ENCODE measurements at regions of chr12 and their contacts with region 1.

Region 1: GRCh38 chr12:120495723-120496412 is at the start of gene DYNLL1:
- DNase-seq: peak; percentile 97
- ATAC-seq: peak; percentile 96
- H3K4me3 Mint-ChIP-seq: peak within 1 kb of the TSS; percentile 84
- H3K27ac Mint-ChIP-seq: peak within 1 kb of the TSS; percentile 72
- H3K4me1 Mint-ChIP-seq: peaks cover 30% of the 10 kb centered on the region
- H3K27me3 Mint-ChIP-seq: no peaks in the 10 kb centered on the region
- total RNA-seq, gene DYNLL1: 190 to 264 TPM

Region 2: GRCh38 chr12:120437754-120438494 is 57.9 kb before region 1 on chr12 and contains the start of gene COX6A1:
- CTCF ChIA-PET with region 1: interaction called, 23 read pairs
- DNase-seq: peak; percentile 99
- ATAC-seq: peak; percentile 98
- H3K4me3 Mint-ChIP-seq: peak within 1 kb of the TSS; percentile 86
- H3K27ac Mint-ChIP-seq: peak within 1 kb of the TSS; percentile 95
- H3K4me1 Mint-ChIP-seq: peaks cover 39% of the 10 kb centered on the region
- H3K27me3 Mint-ChIP-seq: no peaks in the 10 kb centered on the region
- total RNA-seq, gene COX6A1: 329 to 408 TPM

Region 3: DNA sequence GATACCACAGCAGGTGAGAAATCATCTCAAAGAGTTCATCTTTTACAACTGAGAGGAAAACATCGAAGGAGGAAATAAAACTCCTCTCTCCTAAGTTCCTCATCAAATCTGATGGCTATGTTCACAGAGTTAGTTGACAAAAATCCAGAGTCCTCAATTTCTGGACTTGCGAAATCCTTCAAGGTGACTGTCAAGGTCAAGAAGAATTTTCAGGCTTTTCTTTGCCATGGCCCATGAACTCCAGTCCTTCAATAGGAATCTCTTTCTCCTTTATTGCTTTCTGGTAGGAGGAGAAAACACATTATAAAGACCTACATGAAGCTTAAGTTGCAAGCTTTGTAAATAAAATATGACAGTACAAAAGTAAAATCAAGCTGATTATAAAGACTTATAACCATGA is 51.2 kb before region 1 on chr12:
- CTCF ChIA-PET with region 1: interaction called, 23 read pairs
- DNase-seq: no peak
- ATAC-seq: no peak
- H3K4me3 Mint-ChIP-seq: peak overlapping the region; percentile 99
- H3K27ac Mint-ChIP-seq: peak overlapping the region; percentile 90
- H3K4me1 Mint-ChIP-seq: peaks cover 57% of the 10 kb centered on the region
- H3K27me3 Mint-ChIP-seq: no peaks in the 10 kb centered on the region

Measured in activated CD8-positive, alpha-beta memory T cell treated with anti-CD3 and anti-CD28 coated beads, Interleukin-2, amount 10 ng/mL, durations not matched to agents 7 days and 5 days (primary cell).